Activated CD4-positive, alpha-beta T cell treated with anti-CD3 and anti-CD28 coated beads for 36 hours (primary cell): ENCODE measurements at regions of chr1 and their contacts with region 1.

Region 1: GRCh38 chr1:150561974-150562445 is 12.8 kb downstream of the ADAMTSL4 start:
- DNase-seq: peak; percentile 96
- ATAC-seq: peak; percentile 37
- H3K4me3 Mint-ChIP-seq: peak overlapping the region; percentile 81
- H3K27ac Mint-ChIP-seq: peak overlapping the region; percentile 99
- H3K4me1 Mint-ChIP-seq: peaks cover 57% of the 10 kb centered on the region
- H3K27me3 Mint-ChIP-seq: no peaks in the 10 kb centered on the region

Region 2: DNA sequence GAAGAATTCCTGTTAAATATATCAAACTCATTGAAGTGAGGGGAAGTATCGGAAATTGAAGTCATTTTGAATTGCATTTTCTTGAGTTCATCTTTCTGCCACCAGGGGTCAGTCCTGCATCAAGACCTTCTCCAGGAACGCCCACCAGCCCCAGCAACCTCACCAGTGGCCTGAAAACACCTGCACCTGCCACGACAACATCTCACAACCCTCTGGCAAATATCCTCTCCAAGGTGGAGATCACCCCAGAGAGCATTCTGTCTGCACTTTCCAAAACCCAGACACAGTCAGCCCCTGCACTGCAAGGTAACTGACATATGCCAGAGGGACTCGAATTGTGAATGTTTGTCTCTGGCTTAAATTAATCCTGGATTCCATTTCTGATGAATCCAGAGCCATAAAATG is 97.6 kb before region 1 on chr1:
- CTCF ChIA-PET with region 1: interaction called, 8 read pairs
- POLR2A ChIA-PET with region 1: no interaction called
- intact Hi-C with region 1: loop called (anchors 1 to 5 kb)
- DNase-seq: peak; percentile 85
- ATAC-seq: peak; percentile 69
- H3K4me3 Mint-ChIP-seq: no peak overlapping the region
- H3K27ac Mint-ChIP-seq: no peak overlapping the region
- H3K4me1 Mint-ChIP-seq: peaks cover 4% of the 10 kb centered on the region
- H3K27me3 Mint-ChIP-seq: no peaks in the 10 kb centered on the region

Region 3: GRCh38 chr1:150613061-150613920 is 51.3 kb after region 1 on chr1:
- CTCF ChIA-PET with region 1: interaction called, 461 read pairs
- POLR2A ChIA-PET with region 1: interaction called, 22 read pairs
- intact Hi-C with region 1: loop called (anchors 1 kb)
- DNase-seq: peak; percentile 78
- ATAC-seq: peak; percentile 63
- H3K4me3 Mint-ChIP-seq: peak overlapping the region; percentile 60
- H3K27ac Mint-ChIP-seq: peak overlapping the region; percentile 90
- H3K4me1 Mint-ChIP-seq: peaks cover 67% of the 10 kb centered on the region
- H3K27me3 Mint-ChIP-seq: no peaks in the 10 kb centered on the region

Region 4: DNA sequence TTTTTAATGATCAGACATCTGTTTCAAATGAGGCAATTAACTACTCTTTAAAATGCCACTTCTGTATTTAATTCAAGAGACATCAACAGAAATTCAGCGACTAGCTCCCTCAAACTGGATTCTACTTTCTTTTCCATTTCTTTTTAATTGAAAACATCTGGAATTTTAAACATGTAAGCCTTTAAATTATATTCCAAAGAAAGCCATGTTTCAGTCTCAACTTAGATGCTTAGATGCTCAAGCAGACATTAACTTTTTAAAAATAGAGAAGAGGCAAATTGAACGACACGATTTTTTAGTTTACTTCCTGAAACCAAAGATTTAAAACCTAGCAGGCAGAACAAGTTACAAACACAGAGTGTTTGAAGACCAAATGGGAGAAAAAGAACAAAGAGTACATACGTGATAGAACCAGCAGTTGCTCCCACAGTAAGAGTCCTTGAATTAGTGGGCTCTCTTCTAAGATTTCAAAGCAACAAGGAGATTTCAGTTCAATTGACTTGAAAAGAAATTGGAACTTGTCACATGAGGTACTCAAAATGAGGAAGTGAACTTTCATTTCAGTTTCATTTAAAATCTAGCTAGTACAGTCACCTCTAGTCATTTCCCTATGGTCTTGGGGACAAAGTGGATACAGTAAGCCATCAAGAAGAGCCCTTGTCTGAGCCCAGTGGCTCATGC is 203.4 kb after region 1 on chr1 and contains the start of gene CTSS:
- CTCF ChIA-PET with region 1: interaction called, 3 read pairs
- POLR2A ChIA-PET with region 1: no interaction called
- intact Hi-C with region 1: loop called in 1 of 2 experiments (anchors 10 kb)
- DNase-seq: no peak
- ATAC-seq: peak; percentile 94
- H3K4me3 Mint-ChIP-seq: peak within 1 kb of the TSS; percentile 80
- H3K27ac Mint-ChIP-seq: peak within 1 kb of the TSS; percentile 91
- H3K4me1 Mint-ChIP-seq: peaks cover 33% of the 10 kb centered on the region
- H3K27me3 Mint-ChIP-seq: no peaks in the 10 kb centered on the region
- total RNA-seq, gene CTSS: 31.4 to 44.8 TPM

Region 5: DNA sequence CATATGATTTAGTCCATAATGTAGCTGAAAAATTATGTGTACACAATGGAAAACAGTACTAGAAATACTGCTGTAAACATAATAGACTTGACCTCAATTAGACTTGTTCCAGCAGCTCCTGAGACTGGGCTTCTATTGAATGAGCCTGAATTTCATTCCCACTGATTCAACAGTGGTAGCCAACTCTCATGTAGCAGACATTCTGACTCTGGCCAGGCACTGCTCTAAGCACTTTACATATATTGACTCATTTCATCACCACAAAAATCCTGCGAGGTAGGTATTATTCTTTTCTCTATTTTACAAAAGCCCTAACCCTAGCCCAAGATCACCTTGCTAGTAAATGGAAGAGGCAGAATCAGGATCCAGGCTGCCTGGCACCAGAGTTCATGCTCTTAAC is 216.4 kb after region 1 on chr1:
- CTCF ChIA-PET with region 1: no interaction called
- POLR2A ChIA-PET with region 1: no interaction called
- intact Hi-C with region 1: no loop called
- DNase-seq: no peak
- ATAC-seq: no peak
- H3K4me3 Mint-ChIP-seq: no peak overlapping the region
- H3K27ac Mint-ChIP-seq: no peak overlapping the region
- H3K4me1 Mint-ChIP-seq: peaks cover 10% of the 10 kb centered on the region
- H3K27me3 Mint-ChIP-seq: no peaks in the 10 kb centered on the region

Region 6: GRCh38 chr1:151008190-151008860 is 446.3 kb after region 1 on chr1 and contains the start of gene PRUNE1:
- CTCF ChIA-PET with region 1: interaction called, 11 read pairs
- POLR2A ChIA-PET with region 1: no interaction called
- intact Hi-C with region 1: loop called in 1 of 2 experiments (anchors 2 kb)
- DNase-seq: peak; percentile 99
- ATAC-seq: peak; percentile 84
- H3K4me3 Mint-ChIP-seq: peak within 1 kb of the TSS; percentile 90
- H3K27ac Mint-ChIP-seq: peak within 1 kb of the TSS; percentile 96
- H3K4me1 Mint-ChIP-seq: peaks cover 63% of the 10 kb centered on the region
- H3K27me3 Mint-ChIP-seq: no peaks in the 10 kb centered on the region
- total RNA-seq, gene PRUNE1: 13.6 to 18.6 TPM

Region 7: DNA sequence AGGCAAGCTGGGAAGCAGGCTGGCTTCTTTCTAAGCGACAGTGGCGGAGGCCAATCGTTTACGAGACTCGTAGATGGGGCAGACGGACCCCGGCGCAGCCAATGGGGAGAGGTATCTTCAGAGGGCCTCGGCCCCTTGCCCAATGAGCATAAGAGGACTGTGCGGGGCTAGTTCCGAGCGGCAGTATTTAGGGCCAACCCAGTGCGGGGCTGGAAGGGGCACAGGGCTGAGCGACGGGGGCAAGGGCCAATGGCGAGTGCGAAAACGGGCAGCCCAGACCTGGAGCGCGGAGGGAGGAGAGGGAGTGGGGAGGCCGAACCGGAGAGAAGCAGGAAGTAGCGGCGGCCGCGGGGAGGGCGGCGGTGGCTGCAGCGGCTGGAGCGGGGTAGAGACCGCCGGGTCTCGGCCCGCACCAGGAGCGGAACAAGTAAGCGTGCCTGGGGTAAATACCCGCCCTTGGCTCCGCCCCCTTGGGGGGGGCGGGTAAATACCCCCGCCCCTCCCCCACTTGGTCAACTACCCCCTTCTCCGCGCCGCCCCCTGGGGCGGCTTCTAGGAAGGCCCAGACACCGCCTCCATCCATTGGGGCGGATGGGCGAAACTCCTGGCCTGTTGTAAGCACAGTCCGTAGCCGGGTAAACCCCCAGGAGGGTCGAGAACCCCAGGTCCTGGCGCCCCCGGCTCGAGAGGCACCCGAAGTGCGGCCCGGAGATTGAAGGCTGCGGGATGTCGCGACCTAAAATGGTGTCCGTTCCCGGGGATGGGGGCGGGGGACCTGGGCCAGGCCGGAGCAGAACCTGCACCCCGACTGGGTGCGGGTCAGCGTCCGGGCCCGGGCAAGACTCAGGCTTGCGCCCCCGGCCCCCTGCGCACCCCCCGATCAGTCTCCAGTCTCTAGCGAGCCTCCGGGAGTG is 720.2 kb after region 1 on chr1 and contains the start of gene ZNF687:
- CTCF ChIA-PET with region 1: no interaction called
- POLR2A ChIA-PET with region 1: no interaction called
- intact Hi-C with region 1: loop called in 1 of 2 experiments (anchors 1 kb)
- DNase-seq: peak; percentile 99
- ATAC-seq: peak; percentile 93
- H3K4me3 Mint-ChIP-seq: peak within 1 kb of the TSS; percentile 81
- H3K27ac Mint-ChIP-seq: peak within 1 kb of the TSS; percentile 95
- H3K4me1 Mint-ChIP-seq: peaks cover 27% of the 10 kb centered on the region
- H3K27me3 Mint-ChIP-seq: no peaks in the 10 kb centered on the region
- total RNA-seq, gene ZNF687: 27.2 to 30.1 TPM